ENCODE measurements at regions of chr2 and their contacts with region 1.

Region 1: GRCh38 chr2:19362755-19363473 is 4.5 kb upstream of the OSR1 start:
- DNase-seq: peak; percentile 81 to 90 (median 87)
- H3K4me3 ChIP-seq: peak overlapping the region; percentile 31 to 72 (median 57)
- H3K27ac ChIP-seq: peak overlapping the region in 2 of 5 donors; percentile 41 to 68
- H3K4me1 ChIP-seq: peaks cover 5 to 21% of the 10 kb centered on the region in 2 donors
- H3K27me3 ChIP-seq: peaks cover 14% of the 10 kb centered on the region
- CTCF ChIP-seq: peak; percentile 72 to 83 (median 80)
- POLR2A ChIP-seq: peak in 1 of 2 donors; percentile 28

Region 2: DNA sequence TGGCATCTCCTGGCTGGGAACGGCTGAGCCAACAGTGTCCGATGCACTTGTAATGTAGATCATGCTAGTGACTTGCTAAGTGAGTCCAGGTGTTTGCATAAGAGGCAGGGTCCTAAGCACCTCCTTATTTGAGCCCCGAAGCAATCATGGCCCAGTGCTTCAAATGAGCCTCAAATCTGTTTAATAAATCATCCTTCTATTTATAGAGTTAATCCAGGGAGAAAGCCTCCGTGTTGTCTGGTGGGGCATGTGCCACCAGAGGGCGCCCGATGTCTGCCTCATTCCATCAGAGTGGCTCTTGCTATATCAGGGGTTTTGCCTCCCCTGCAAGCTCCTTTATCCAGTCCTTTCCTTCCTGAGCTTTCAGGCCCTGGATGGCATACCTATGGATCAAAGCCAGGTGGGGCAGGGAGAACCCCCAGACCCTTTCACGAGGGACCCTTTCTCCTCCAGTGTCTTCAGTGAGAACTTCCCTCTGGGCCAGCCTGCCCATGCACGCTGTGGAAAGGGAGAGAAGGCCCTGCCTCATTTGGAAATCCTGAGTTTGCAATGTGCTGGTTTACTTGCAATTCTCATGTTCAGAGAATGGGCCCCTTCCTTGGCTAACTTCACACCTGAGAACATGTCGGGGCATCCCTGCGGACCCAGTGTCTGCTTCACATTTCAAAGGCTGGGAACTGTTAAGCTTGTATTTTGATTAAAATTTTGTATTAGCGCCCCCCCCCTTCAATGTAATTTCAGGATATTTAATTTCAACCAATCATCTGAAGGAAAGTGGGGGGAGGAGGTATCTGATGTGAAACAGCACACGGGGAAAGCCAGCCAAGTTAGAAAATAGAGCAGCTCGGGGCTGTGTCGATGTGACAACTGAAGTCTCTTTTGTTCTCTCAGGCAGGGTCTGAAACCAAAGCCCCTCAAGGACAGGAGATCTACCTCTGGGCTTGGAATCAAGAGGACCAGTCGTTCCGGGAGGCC is 842.2 kb before region 1 on chr2:
- intact Hi-C with region 1: loop called in 1 of 2 experiments (anchors 10 kb)
- DNase-seq: peak; percentile 72 to 93 (median 80)
- H3K4me3 ChIP-seq: no peak overlapping the region
- H3K27ac ChIP-seq: no peak overlapping the region
- H3K4me1 ChIP-seq: peaks cover 0 to 5% of the 10 kb centered on the region in 2 donors
- H3K27me3 ChIP-seq: no peaks in the 10 kb centered on the region
- CTCF ChIP-seq: peak; percentile 79 to 92 (median 86)
- POLR2A ChIP-seq: no peak

Region 3: GRCh38 chr2:18749912-18750526 is 612.9 kb before region 1 on chr2:
- intact Hi-C with region 1: loop called in 1 of 2 experiments (anchors 2 kb)
- DNase-seq: peak; percentile 42 to 76 (median 63)
- H3K4me3 ChIP-seq: no peak overlapping the region
- H3K27ac ChIP-seq: no peak overlapping the region
- H3K4me1 ChIP-seq: no peaks in the 10 kb centered on the region
- H3K27me3 ChIP-seq: no peaks in the 10 kb centered on the region
- CTCF ChIP-seq: peak; percentile 71 to 90 (median 85)
- POLR2A ChIP-seq: no peak

Region 4: GRCh38 chr2:18883616-18884456 is 479.1 kb before region 1 on chr2:
- intact Hi-C with region 1: loop called in 1 of 2 experiments (anchors 10 kb)
- DNase-seq: peak in 4 of 7 donors; percentile 22 to 68 (median 46)
- H3K4me3 ChIP-seq: no peak overlapping the region
- H3K27ac ChIP-seq: no peak overlapping the region
- H3K4me1 ChIP-seq: no peaks in the 10 kb centered on the region
- H3K27me3 ChIP-seq: no peaks in the 10 kb centered on the region
- CTCF ChIP-seq: peak in 5 of 6 experiments; percentile 26 to 50 (median 47)
- POLR2A ChIP-seq: no peak

Region 5: GRCh38 chr2:18959952-18960730 is 402.8 kb before region 1 on chr2:
- intact Hi-C with region 1: no loop called
- DNase-seq: no peak
- H3K4me3 ChIP-seq: no peak overlapping the region
- H3K27ac ChIP-seq: no peak overlapping the region
- H3K4me1 ChIP-seq: no peaks in the 10 kb centered on the region
- H3K27me3 ChIP-seq: no peaks in the 10 kb centered on the region
- CTCF ChIP-seq: no peak
- POLR2A ChIP-seq: no peak

Region 6: DNA sequence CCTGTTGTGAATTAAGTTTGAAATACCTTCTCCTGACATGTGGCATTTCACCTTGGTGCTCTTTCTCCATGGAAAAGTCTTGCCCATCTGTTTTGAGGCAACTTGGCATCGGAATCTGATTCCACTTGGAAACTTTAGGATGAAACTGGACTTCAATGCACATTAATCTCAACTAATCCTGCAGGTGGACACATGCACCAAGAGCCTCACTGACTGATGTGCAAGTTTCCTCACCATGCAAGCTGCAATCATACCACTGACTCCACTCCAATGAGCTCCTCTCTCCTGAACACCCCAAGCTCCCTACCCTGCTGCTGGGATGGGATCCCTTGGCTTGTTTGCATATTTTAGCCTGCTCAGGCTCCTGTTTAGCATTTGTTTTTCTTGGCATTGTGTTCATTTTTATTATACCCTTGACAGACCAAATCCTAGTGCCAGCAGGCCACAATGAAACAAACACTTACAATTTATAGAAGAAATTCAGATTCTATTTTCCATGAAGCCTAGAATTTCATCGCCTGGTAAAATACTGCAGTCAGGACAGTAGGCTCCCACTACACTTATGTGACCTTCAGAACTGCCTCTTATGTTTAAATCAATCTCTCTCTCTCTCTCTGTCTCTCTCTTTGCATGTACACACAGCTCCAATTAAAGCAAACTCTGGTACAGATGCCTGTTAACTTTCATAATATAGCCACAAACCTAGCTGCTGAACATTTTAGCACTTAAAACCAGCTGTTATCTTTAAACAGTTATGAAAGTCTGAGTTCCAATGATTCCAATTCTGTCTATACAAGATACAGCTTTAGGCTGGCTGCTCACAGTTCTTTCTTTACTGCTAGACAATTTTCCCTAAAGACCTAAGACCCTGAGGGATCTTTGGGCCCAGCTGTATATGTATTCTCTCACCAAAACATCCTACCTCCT is 146.0 kb before region 1 on chr2:
- intact Hi-C with region 1: no loop called
- DNase-seq: no peak
- H3K4me3 ChIP-seq: no peak overlapping the region
- H3K27ac ChIP-seq: no peak overlapping the region
- H3K4me1 ChIP-seq: no peaks in the 10 kb centered on the region
- H3K27me3 ChIP-seq: no peaks in the 10 kb centered on the region
- CTCF ChIP-seq: no peak
- POLR2A ChIP-seq: no peak

Region 7: DNA sequence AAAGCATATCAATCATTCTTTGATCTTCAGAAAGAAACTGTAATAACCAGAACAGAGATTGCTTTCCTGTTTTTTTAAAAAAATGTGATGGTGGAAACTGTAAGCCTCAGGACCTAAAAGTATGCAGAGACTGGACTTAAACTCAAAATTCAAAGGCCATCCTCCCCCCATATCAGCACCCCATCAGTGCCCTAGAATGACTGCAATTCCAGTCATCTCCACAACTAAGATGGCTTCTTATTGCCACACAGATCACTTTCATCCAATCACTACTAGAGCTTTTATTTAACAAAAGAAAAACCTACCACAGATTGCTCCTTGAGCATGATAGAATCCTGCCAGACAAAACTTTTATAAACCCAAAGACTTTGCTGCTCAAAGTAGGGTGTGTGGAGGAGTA is 96.1 kb before region 1 on chr2:
- intact Hi-C with region 1: no loop called
- DNase-seq: no peak
- H3K4me3 ChIP-seq: no peak overlapping the region
- H3K27ac ChIP-seq: no peak overlapping the region
- H3K4me1 ChIP-seq: no peaks in the 10 kb centered on the region
- H3K27me3 ChIP-seq: no peaks in the 10 kb centered on the region
- CTCF ChIP-seq: no peak
- POLR2A ChIP-seq: no peak

Measured in adrenal gland (tissue), 19 donors.